ENCODE measurements at regions of chr9 and their contacts with region 1.

Region 1: DNA sequence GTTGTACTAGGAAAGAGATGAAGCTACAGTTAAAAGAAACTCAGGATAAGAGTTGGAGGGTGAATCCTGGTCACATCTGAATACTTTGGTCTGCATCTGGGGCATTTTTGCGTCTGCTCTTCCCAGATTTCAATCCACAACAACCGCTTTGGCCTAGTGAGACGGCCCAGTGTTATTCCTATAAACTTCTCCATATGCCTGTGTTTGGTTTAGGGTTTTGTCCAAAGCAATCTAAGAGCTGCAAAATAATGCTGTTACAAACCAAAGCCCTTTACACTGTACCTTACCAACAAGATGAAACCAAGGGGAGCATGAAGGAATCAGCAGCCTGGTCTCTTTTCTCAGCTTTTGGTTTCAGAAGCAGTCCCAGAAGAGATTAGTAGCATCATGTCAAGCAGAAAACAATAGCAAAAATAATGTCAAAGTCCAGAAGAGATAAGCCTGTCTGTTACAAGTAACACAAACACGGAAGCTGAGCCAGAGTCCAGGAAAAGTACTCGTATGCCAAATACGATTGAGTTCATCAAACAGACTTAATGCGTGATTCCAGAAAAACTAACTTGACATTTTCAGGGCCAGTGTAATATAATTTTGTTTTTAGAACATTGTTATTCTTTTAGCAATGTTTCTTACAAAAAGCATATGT is 379.9 kb upstream of the ACO1 start:
- DNase-seq: no peak
- H3K4me3 ChIP-seq: no peak overlapping the region
- H3K27ac ChIP-seq: no peak overlapping the region
- H3K4me1 ChIP-seq: no peaks in the 10 kb centered on the region
- H3K27me3 ChIP-seq: no peaks in the 10 kb centered on the region
- CTCF ChIP-seq: no peak
- POLR2A ChIP-seq: no peak

Region 2: DNA sequence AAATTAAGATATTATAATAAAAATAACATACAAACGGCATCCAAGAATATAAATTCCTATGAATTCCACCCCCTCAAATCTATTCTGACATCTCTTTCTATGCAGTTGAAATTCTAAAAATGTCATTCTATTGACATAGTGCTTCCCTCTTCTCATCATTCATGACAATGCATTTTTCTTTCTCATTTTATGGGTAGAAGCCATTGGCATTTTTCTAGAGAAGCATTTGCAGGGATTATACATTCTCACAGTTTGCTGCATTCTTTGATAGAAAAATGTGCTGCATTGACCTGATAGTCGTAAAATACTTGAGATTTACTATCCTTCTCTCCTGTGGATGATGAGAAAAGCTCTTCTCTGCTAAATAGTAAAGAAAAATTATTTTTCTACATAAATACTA is 381.0 kb before region 1 on chr9:
- intact Hi-C with region 1: loop called (anchors 10 kb)
- DNase-seq: no peak
- H3K4me3 ChIP-seq: no peak overlapping the region
- H3K27ac ChIP-seq: no peak overlapping the region
- H3K4me1 ChIP-seq: no peaks in the 10 kb centered on the region
- H3K27me3 ChIP-seq: no peaks in the 10 kb centered on the region
- CTCF ChIP-seq: no peak
- POLR2A ChIP-seq: no peak